ENCODE measurements at regions of chr7 and their contacts with region 1.

Region 1: GRCh38 chr7:137164251-137164650 is 179.3 kb downstream of the PTN start:
- DNase-seq: no peak
- ATAC-seq: no peak
- H3K4me3 ChIP-seq: no peak overlapping the region
- H3K27ac ChIP-seq: no peak overlapping the region
- H3K4me1 ChIP-seq: peaks cover 4% of the 10 kb centered on the region
- H3K27me3 ChIP-seq: no peaks in the 10 kb centered on the region
- CTCF ChIP-seq: no peak
- POLR2A ChIP-seq: no peak
- RAD21 ChIP-seq: no peak

Region 2: DNA sequence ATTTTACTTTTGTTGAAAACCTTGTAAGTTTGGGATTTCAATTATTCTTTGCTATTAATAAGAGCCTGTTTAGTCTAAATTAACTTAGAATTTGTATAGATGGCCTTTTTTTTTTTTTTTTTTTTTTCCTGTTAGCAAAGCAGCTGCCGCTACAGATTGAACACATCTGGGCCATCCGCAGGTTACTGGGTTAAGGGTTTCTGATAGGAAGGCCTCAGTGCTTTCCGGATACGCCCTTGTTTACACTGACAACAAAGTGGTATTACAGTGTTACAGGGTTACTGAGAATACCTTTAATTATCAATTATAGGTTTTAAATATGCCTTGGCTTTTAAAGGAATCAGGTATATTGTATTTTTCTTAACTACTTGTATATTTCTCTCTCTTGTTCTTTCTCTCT is 102.5 kb after region 1 on chr7:
- CTCF ChIA-PET with region 1: no interaction called
- POLR2A ChIA-PET with region 1: no interaction called
- dilution Hi-C with region 1: no loop called
- in situ Hi-C with region 1: no loop called
- intact Hi-C with region 1: no loop called
- DNase-seq: no peak
- ATAC-seq: no peak
- H3K4me3 ChIP-seq: no peak overlapping the region
- H3K27ac ChIP-seq: no peak overlapping the region
- H3K4me1 ChIP-seq: no peaks in the 10 kb centered on the region
- H3K27me3 ChIP-seq: no peaks in the 10 kb centered on the region
- CTCF ChIP-seq: no peak
- POLR2A ChIP-seq: no peak
- RAD21 ChIP-seq: no peak

Region 3: DNA sequence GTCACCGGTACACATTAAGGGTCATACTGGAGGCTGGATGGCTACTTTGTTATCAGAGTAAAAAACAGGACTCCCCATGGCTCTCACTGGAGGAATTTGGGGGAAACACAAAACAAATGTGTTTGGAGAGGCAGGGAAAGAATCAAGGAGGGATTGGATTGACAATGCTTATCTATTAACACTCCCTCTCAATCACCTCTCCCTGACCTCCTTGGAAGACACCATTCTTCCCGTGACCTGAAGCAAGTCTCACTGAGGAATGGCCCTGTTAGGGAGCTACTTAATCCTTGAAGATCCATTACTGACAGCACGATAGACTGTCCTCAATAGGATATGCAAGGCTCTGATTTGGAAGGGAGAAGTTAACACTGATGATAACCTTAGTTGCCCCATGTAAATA is 421.3 kb after region 1 on chr7:
- CTCF ChIA-PET with region 1: interaction called, 34 read pairs
- POLR2A ChIA-PET with region 1: no interaction called
- dilution Hi-C with region 1: no loop called
- in situ Hi-C with region 1: loop called (anchors 5 kb)
- intact Hi-C with region 1: no loop called
- DNase-seq: no peak
- ATAC-seq: no peak
- H3K4me3 ChIP-seq: no peak overlapping the region
- H3K27ac ChIP-seq: no peak overlapping the region
- H3K4me1 ChIP-seq: peaks cover 6% of the 10 kb centered on the region
- H3K27me3 ChIP-seq: no peaks in the 10 kb centered on the region
- CTCF ChIP-seq: no peak
- POLR2A ChIP-seq: no peak
- RAD21 ChIP-seq: no peak

Measured in IMR-90 (cell line).